Dendritic cell treated with granulocyte-macrophage colony-stimulating factor and Interleukin-4, amounts not matched to agents 40 ng/mL and 50 ng/mL, for 4 days (primary cell): ENCODE measurements at regions of chr12 and their contacts with region 1.

Region 1: GRCh38 chr12:54324617-54325441 is at the start of gene COPZ1:
- H3K4me3 Mint-ChIP-seq: peak within 1 kb of the TSS; percentile 100
- H3K27ac Mint-ChIP-seq: peak within 1 kb of the TSS; percentile 95
- H3K4me1 Mint-ChIP-seq: peaks cover 48% of the 10 kb centered on the region
- H3K27me3 Mint-ChIP-seq: no peaks in the 10 kb centered on the region

Region 2: GRCh38 chr12:54032627-54033100 is 292.2 kb before region 1 on chr12 and contains the start of gene HOXC5:
- intact Hi-C with region 1: no loop called
- H3K4me3 Mint-ChIP-seq: no peak within 1 kb of the TSS
- H3K27ac Mint-ChIP-seq: no peak within 1 kb of the TSS
- H3K4me1 Mint-ChIP-seq: peaks cover 15% of the 10 kb centered on the region
- H3K27me3 Mint-ChIP-seq: peaks cover 93% of the 10 kb centered on the region

Region 3: GRCh38 chr12:54279866-54280467 is 44.9 kb before region 1 on chr12 and contains the start of gene CBX5:
- intact Hi-C with region 1: loop called (anchors 1 kb)
- H3K4me3 Mint-ChIP-seq: no peak within 1 kb of the TSS
- H3K27ac Mint-ChIP-seq: no peak within 1 kb of the TSS
- H3K4me1 Mint-ChIP-seq: peaks cover 35% of the 10 kb centered on the region
- H3K27me3 Mint-ChIP-seq: no peaks in the 10 kb centered on the region

Region 4: GRCh38 chr12:54294152-54294952 is 30.5 kb before region 1 on chr12:
- intact Hi-C with region 1: loop called (anchors 1 kb)
- H3K4me3 Mint-ChIP-seq: peak overlapping the region; percentile 21
- H3K27ac Mint-ChIP-seq: peak overlapping the region; percentile 54
- H3K4me1 Mint-ChIP-seq: peaks cover 94% of the 10 kb centered on the region
- H3K27me3 Mint-ChIP-seq: no peaks in the 10 kb centered on the region